ENCODE measurements at regions of chr10 and their contacts with region 1.

Region 1: GRCh38 chr10:109883859-109884771 is 39.2 kb downstream of the XPNPEP1 start:
- DNase-seq: peak; percentile 56 to 66 (median 61)
- H3K4me3 ChIP-seq: no peak overlapping the region
- H3K4me3 Mint-ChIP-seq: no peak overlapping the region
- H3K27ac ChIP-seq: no peak overlapping the region
- H3K27ac Mint-ChIP-seq: peak overlapping the region in 4 of 7 donors; percentile 24 to 82 (median 62)
- H3K4me1 ChIP-seq: peaks cover 8% of the 10 kb centered on the region
- H3K4me1 Mint-ChIP-seq: peaks cover 4 to 24% (median 14%) of the 10 kb centered on the region in 4 donors
- H3K27me3 ChIP-seq: no peaks in the 10 kb centered on the region
- H3K27me3 Mint-ChIP-seq: no peaks in the 10 kb centered on the region

Region 2: GRCh38 chr10:109914966-109915365 is 30.9 kb after region 1 on chr10:
- CTCF ChIA-PET with region 1: interaction called, 57 read pairs
- POLR2A ChIA-PET with region 1: interaction called, 14 read pairs
- intact Hi-C with region 1: loop called (anchors 5 kb)
- DNase-seq: peak; percentile 56 to 84 (median 60)
- H3K4me3 ChIP-seq: peak overlapping the region in 1 of 2 donors; percentile 15
- H3K4me3 Mint-ChIP-seq: peak overlapping the region in 7 of 8 donors; percentile 29 to 80 (median 72)
- H3K27ac ChIP-seq: peak overlapping the region; percentile 29
- H3K27ac Mint-ChIP-seq: peak overlapping the region; percentile 32 to 94 (median 77)
- H3K4me1 ChIP-seq: peaks cover 81% of the 10 kb centered on the region
- H3K4me1 Mint-ChIP-seq: peaks cover 58 to 95% (median 75%) of the 10 kb centered on the region in 4 donors
- H3K27me3 ChIP-seq: no peaks in the 10 kb centered on the region
- H3K27me3 Mint-ChIP-seq: no peaks in the 10 kb centered on the region

Region 3: GRCh38 chr10:109956454-109957091 is 72.5 kb after region 1 on chr10:
- CTCF ChIA-PET with region 1: interaction called, 23 read pairs
- POLR2A ChIA-PET with region 1: interaction called, 3 read pairs
- intact Hi-C with region 1: loop called (anchors 2 kb)
- DNase-seq: peak in 4 of 5 donors; percentile 11 to 32 (median 14)
- H3K4me3 ChIP-seq: no peak overlapping the region
- H3K4me3 Mint-ChIP-seq: no peak overlapping the region
- H3K27ac ChIP-seq: no peak overlapping the region
- H3K27ac Mint-ChIP-seq: peak overlapping the region in 1 of 7 donors; percentile 24
- H3K4me1 ChIP-seq: no peaks in the 10 kb centered on the region
- H3K4me1 Mint-ChIP-seq: peaks cover 0 to 4% (median under 1%) of the 10 kb centered on the region in 4 donors
- H3K27me3 ChIP-seq: no peaks in the 10 kb centered on the region
- H3K27me3 Mint-ChIP-seq: no peaks in the 10 kb centered on the region

Region 4: GRCh38 chr10:110036640-110037039 is 152.5 kb after region 1 on chr10:
- CTCF ChIA-PET with region 1: interaction called, 19 read pairs
- POLR2A ChIA-PET with region 1: no interaction called
- intact Hi-C with region 1: no loop called
- DNase-seq: no peak
- H3K4me3 ChIP-seq: no peak overlapping the region
- H3K4me3 Mint-ChIP-seq: peak overlapping the region in 2 of 8 donors; percentile 33 to 37
- H3K27ac ChIP-seq: no peak overlapping the region
- H3K27ac Mint-ChIP-seq: peak overlapping the region in 3 of 7 donors; percentile 8 to 51 (median 46)
- H3K4me1 ChIP-seq: peaks cover 91% of the 10 kb centered on the region
- H3K4me1 Mint-ChIP-seq: peaks cover 57 to 93% (median 75%) of the 10 kb centered on the region in 4 donors
- H3K27me3 ChIP-seq: no peaks in the 10 kb centered on the region
- H3K27me3 Mint-ChIP-seq: no peaks in the 10 kb centered on the region

Region 5: GRCh38 chr10:110137142-110137545 is 253.0 kb after region 1 on chr10:
- CTCF ChIA-PET with region 1: interaction called, 13 read pairs
- POLR2A ChIA-PET with region 1: no interaction called
- intact Hi-C with region 1: loop called (anchors 2 kb)
- DNase-seq: peak; percentile 46 to 70 (median 66)
- H3K4me3 ChIP-seq: no peak overlapping the region
- H3K4me3 Mint-ChIP-seq: peak overlapping the region in 1 of 8 donors; percentile 0
- H3K27ac ChIP-seq: peak overlapping the region; percentile 7
- H3K27ac Mint-ChIP-seq: peak overlapping the region; percentile 7 to 83 (median 18)
- H3K4me1 ChIP-seq: peaks cover 24% of the 10 kb centered on the region
- H3K4me1 Mint-ChIP-seq: peaks cover 17 to 30% (median 26%) of the 10 kb centered on the region in 4 donors
- H3K27me3 ChIP-seq: no peaks in the 10 kb centered on the region
- H3K27me3 Mint-ChIP-seq: no peaks in the 10 kb centered on the region

Region 6: GRCh38 chr10:110387983-110388687 is 504.0 kb after region 1 on chr10:
- CTCF ChIA-PET with region 1: no interaction called
- POLR2A ChIA-PET with region 1: no interaction called
- intact Hi-C with region 1: no loop called
- DNase-seq: peak; percentile 1 to 45 (median 11)
- H3K4me3 ChIP-seq: no peak overlapping the region
- H3K4me3 Mint-ChIP-seq: peak overlapping the region in 2 of 8 donors; percentile 20 to 38
- H3K27ac ChIP-seq: no peak overlapping the region
- H3K27ac Mint-ChIP-seq: peak overlapping the region in 6 of 7 donors; percentile 44 to 81 (median 70)
- H3K4me1 ChIP-seq: peaks cover 14% of the 10 kb centered on the region
- H3K4me1 Mint-ChIP-seq: peaks cover 12 to 17% (median 14%) of the 10 kb centered on the region in 4 donors
- H3K27me3 ChIP-seq: no peaks in the 10 kb centered on the region
- H3K27me3 Mint-ChIP-seq: no peaks in the 10 kb centered on the region